CD4-positive, alpha-beta memory T cell (primary cell): ENCODE measurements at regions of chr12 and their contacts with region 1.

Region 1: DNA sequence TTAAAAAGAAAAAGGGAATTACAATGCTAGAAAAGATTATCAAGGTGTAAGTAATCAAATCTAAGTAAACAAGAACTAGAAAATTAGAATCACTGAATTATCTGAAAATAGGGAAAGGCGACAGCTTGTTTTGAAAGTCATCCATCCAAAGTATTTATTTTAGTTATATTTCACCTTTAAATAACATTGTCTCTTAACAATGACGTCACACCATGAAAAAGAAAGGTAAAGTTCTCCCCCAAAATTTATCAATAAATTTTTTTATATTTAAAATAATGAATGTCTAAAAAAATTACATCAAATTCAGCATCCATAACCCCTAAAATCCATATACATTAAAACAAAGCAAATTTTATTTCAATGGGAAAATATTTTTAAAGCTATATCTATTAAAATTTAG is 223.2 kb downstream of the RERGL start:
- DNase-seq: no peak
- H3K4me3 ChIP-seq: no peak overlapping the region
- H3K4me3 Mint-ChIP-seq: no peak overlapping the region
- H3K27ac ChIP-seq: no peak overlapping the region
- H3K27ac Mint-ChIP-seq: no peak overlapping the region
- H3K4me1 ChIP-seq: no peaks in the 10 kb centered on the region
- H3K4me1 Mint-ChIP-seq: no peaks in the 10 kb centered on the region
- H3K27me3 ChIP-seq: no peaks in the 10 kb centered on the region
- H3K27me3 Mint-ChIP-seq: no peaks in the 10 kb centered on the region

Region 2: DNA sequence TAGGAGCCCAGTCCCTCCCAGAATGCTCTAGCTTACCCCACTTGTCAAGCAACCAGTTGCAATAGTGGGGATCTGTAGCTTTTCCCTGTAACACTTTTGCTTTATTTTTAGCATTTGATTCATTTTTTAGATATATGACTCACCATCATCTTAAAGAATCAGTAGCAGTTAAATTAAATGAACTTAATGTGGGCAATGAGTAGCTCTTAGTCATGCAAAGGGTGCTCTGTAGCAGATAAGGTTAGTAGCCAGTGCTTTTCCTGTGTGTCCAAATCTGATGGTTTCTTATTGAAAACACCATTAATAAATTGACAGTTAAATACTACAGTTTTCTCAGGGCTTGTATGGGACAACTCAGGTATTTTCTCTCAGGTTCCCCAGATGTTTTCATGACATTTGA is 88.6 kb before region 1 on chr12:
- CTCF ChIA-PET with region 1: no interaction called
- POLR2A ChIA-PET with region 1: no interaction called
- intact Hi-C with region 1: loop called (anchors 2 kb)
- DNase-seq: no peak
- H3K4me3 ChIP-seq: no peak overlapping the region
- H3K4me3 Mint-ChIP-seq: no peak overlapping the region
- H3K27ac ChIP-seq: no peak overlapping the region
- H3K27ac Mint-ChIP-seq: no peak overlapping the region
- H3K4me1 ChIP-seq: no peaks in the 10 kb centered on the region
- H3K4me1 Mint-ChIP-seq: no peaks in the 10 kb centered on the region
- H3K27me3 ChIP-seq: no peaks in the 10 kb centered on the region
- H3K27me3 Mint-ChIP-seq: no peaks in the 10 kb centered on the region

Region 3: DNA sequence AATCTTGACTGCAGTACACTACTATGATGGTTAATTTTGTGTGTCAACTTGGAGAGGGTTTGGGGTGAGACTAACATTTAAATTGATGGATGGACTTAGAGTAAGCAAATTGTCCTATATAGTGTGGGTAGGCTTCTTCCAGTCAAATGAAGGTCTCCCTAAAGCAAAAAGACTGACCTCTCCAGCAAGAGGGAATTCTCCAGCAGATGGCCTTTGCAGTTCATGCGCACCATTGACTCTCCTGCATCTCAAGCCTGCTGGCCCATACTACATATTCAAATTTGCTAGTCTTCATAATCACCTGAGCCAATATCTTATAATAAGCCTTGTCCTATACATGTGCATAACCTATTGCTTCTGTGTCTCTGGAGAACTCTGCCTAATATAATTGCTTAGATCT is 37.0 kb before region 1 on chr12:
- CTCF ChIA-PET with region 1: no interaction called
- POLR2A ChIA-PET with region 1: no interaction called
- intact Hi-C with region 1: no loop called
- DNase-seq: no peak
- H3K4me3 ChIP-seq: no peak overlapping the region
- H3K4me3 Mint-ChIP-seq: no peak overlapping the region
- H3K27ac ChIP-seq: no peak overlapping the region
- H3K27ac Mint-ChIP-seq: no peak overlapping the region
- H3K4me1 ChIP-seq: no peaks in the 10 kb centered on the region
- H3K4me1 Mint-ChIP-seq: no peaks in the 10 kb centered on the region
- H3K27me3 ChIP-seq: no peaks in the 10 kb centered on the region
- H3K27me3 Mint-ChIP-seq: no peaks in the 10 kb centered on the region